Activated naive CD4-positive, alpha-beta T cell treated with anti-CD3 and anti-CD28 coated beads for 36 hours (primary cell): ENCODE measurements at regions of chr6 and their contacts with region 1.

Region 1: GRCh38 chr6:30453508-30454116 is 35.7 kb upstream of the HLA-E start:
- DNase-seq: peak; percentile 91
- H3K4me3 Mint-ChIP-seq: peak overlapping the region; percentile 64
- H3K27ac Mint-ChIP-seq: no peak overlapping the region
- H3K4me1 Mint-ChIP-seq: peaks cover 36% of the 10 kb centered on the region
- H3K27me3 Mint-ChIP-seq: peaks cover 81% of the 10 kb centered on the region

Region 2: GRCh38 chr6:29942275-29943052 is 511.1 kb before region 1 on chr6 and contains the start of gene HLA-A:
- CTCF ChIA-PET with region 1: no interaction called
- intact Hi-C with region 1: no loop called
- DNase-seq: peak; percentile 97
- H3K4me3 Mint-ChIP-seq: peak within 1 kb of the TSS; percentile 97
- H3K27ac Mint-ChIP-seq: peak within 1 kb of the TSS; percentile 99
- H3K4me1 Mint-ChIP-seq: peaks cover 53% of the 10 kb centered on the region
- H3K27me3 Mint-ChIP-seq: no peaks in the 10 kb centered on the region
- total RNA-seq, gene HLA-A: 1,509 to 1,515 TPM

Region 3: DNA sequence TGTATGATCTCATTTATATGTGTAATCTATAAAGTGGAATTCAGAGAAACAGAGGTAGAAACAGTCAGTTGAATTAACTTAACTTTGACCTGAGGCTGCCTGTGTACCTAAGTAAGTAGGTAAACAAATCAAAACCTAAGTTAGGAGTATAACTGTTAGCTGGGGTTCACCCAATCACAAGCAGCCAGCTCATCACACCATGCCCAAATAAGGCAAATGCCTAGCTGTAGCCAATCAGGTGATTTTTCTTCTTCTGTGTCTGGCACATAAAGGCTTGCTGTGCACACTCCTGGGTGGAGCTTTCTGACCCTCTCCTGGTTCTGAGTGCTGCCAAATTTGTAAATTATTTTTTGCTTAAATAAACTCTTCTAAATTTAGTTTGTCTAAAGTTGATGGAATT is 181.6 kb before region 1 on chr6:
- CTCF ChIA-PET with region 1: no interaction called
- intact Hi-C with region 1: no loop called
- DNase-seq: no peak
- H3K4me3 Mint-ChIP-seq: no peak overlapping the region
- H3K27ac Mint-ChIP-seq: no peak overlapping the region
- H3K4me1 Mint-ChIP-seq: no peaks in the 10 kb centered on the region
- H3K27me3 Mint-ChIP-seq: no peaks in the 10 kb centered on the region

Region 4: GRCh38 chr6:30357678-30358540 is 95.7 kb before region 1 on chr6:
- CTCF ChIA-PET with region 1: interaction called, 5 read pairs
- intact Hi-C with region 1: loop called (anchors 5 kb)
- DNase-seq: peak; percentile 70
- H3K4me3 Mint-ChIP-seq: peak overlapping the region; percentile 77
- H3K27ac Mint-ChIP-seq: no peak overlapping the region
- H3K4me1 Mint-ChIP-seq: peaks cover 4% of the 10 kb centered on the region
- H3K27me3 Mint-ChIP-seq: peaks cover 37% of the 10 kb centered on the region

Region 5: GRCh38 chr6:30411515-30412207 is 42.0 kb before region 1 on chr6:
- CTCF ChIA-PET with region 1: interaction called, 11 read pairs
- intact Hi-C with region 1: loop called (anchors 2 kb)
- DNase-seq: peak; percentile 76
- H3K4me3 Mint-ChIP-seq: peak overlapping the region; percentile 38
- H3K27ac Mint-ChIP-seq: no peak overlapping the region
- H3K4me1 Mint-ChIP-seq: peaks cover 5% of the 10 kb centered on the region
- H3K27me3 Mint-ChIP-seq: peaks cover 23% of the 10 kb centered on the region

Region 6: GRCh38 chr6:30463651-30464618 is 10.3 kb after region 1 on chr6:
- CTCF ChIA-PET with region 1: interaction called, 30 read pairs
- intact Hi-C with region 1: loop called (anchors 1 kb)
- DNase-seq: peak; percentile 77
- H3K4me3 Mint-ChIP-seq: no peak overlapping the region
- H3K27ac Mint-ChIP-seq: no peak overlapping the region
- H3K4me1 Mint-ChIP-seq: peaks cover 29% of the 10 kb centered on the region
- H3K27me3 Mint-ChIP-seq: peaks cover 83% of the 10 kb centered on the region

Region 7: DNA sequence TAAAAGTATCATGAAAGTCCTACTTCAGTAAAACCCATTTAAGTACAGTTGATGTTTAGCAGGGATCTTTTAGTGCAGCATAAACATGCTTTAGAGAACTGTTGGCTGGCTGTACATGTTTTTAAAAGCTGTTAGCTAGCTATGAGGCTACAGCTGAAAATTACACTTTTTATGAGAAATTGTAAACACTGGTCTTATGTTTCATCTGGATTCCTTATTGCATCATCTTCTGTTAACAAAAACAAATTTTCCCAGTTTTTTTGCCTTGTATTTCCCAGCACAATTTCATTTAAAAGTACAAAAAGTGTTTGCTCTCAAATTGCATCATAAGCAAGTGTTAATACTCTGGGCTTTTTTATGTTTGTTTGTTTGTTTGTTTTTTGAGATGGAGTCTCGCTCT is 17.4 kb after region 1 on chr6:
- CTCF ChIA-PET with region 1: interaction called, 30 read pairs
- intact Hi-C with region 1: loop called (anchors 1 kb)
- DNase-seq: no peak
- H3K4me3 Mint-ChIP-seq: no peak overlapping the region
- H3K27ac Mint-ChIP-seq: no peak overlapping the region
- H3K4me1 Mint-ChIP-seq: peaks cover 7% of the 10 kb centered on the region
- H3K27me3 Mint-ChIP-seq: peaks cover 59% of the 10 kb centered on the region